ENCODE measurements at regions of chr9 and their contacts with region 1.

Region 1: DNA sequence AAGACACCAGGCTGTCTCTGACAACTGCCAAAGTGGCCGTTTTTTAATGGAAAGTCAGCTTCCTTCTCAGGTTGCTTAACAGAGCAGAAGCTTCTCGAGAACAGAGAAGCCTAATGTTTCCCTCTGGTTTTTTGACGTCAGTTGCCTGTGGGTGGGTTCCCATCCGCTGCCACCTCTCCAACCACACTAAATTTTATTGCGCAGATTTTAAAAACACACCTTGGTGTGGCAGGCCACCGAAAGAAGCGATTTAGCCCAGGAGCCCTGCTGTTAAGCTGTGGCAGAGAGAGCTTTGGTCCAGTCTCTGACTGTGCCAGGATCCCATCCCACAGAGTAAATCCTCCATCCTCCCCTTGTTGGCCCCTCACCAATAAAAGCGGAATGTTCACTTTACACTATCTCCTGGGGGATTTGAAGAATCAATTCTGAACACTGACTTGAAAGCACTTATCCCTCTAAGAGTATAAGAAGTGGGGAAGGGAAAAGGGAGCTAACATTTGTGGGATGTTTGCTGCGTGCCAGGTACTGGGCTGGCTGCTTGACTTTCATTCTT is 181.6 kb downstream of the AOPEP start:
- DNase-seq: no peak
- H3K4me3 Mint-ChIP-seq: no peak overlapping the region
- H3K27ac Mint-ChIP-seq: no peak overlapping the region
- H3K4me1 Mint-ChIP-seq: peaks cover 7% of the 10 kb centered on the region
- H3K27me3 Mint-ChIP-seq: no peaks in the 10 kb centered on the region

Region 2: DNA sequence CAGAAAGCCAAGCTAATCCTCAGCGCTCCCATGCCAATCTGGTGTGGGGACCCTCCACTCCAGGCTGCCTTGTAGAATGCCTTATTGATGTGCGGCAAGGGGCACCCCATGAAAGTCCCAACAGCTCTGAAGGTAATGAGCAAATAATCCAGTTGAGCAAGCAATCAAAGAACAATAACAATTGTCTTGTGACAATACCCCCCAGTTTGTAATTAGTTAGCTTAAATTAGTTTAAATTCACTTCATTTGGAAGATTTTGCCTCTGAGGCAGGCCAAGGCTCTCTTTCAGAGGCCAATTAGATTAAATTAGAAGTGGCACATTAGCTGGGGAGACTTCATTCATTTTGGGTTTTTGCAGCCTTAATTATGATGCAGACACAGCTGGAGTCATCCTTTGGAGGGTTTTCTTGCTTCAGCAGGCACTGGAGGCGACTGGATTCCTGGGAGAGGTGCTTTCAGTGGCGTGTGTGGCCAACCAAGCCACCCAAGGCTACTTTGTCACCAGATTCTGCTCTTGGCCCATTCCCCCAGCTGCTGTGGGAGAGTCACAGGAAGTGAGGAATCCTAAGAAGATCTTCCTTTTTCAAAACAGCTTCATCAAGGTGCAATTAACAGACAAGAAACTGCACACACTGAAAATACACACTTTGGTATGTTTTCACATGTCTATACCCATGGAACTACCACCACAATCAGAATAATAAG is 250.9 kb before region 1 on chr9:
- intact Hi-C with region 1: no loop called
- DNase-seq: no peak
- H3K4me3 Mint-ChIP-seq: no peak overlapping the region
- H3K27ac Mint-ChIP-seq: no peak overlapping the region
- H3K4me1 Mint-ChIP-seq: peaks cover 30% of the 10 kb centered on the region
- H3K27me3 Mint-ChIP-seq: peaks cover 9% of the 10 kb centered on the region

Region 3: DNA sequence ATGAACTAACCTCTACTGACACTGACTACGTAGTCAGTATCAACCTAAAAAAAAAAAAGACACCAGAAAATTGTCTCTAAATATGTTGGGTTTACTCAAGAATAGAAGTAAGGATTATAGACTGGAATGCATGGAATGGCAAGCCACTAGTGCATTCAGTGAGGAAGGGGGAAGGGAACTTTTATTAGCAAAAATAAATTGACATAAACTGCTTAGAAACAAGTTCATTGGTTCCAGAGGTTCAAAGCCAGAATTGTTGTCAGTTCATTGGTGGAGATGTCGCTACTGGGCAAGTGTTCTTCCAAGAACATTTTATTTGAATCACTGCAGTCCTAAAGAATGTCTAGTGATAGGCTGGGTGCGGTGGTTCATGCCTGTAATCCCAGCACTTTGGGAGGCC is 207.6 kb before region 1 on chr9:
- intact Hi-C with region 1: no loop called
- DNase-seq: no peak
- H3K4me3 Mint-ChIP-seq: no peak overlapping the region
- H3K27ac Mint-ChIP-seq: no peak overlapping the region
- H3K4me1 Mint-ChIP-seq: no peaks in the 10 kb centered on the region
- H3K27me3 Mint-ChIP-seq: peaks cover 23% of the 10 kb centered on the region

Region 4: GRCh38 chr9:94952565-94953373 is 44.7 kb after region 1 on chr9:
- intact Hi-C with region 1: loop called (anchors 5 kb)
- DNase-seq: peak; percentile 77
- H3K4me3 Mint-ChIP-seq: peak overlapping the region; percentile 63
- H3K27ac Mint-ChIP-seq: peak overlapping the region; percentile 65
- H3K4me1 Mint-ChIP-seq: peaks cover 35% of the 10 kb centered on the region
- H3K27me3 Mint-ChIP-seq: no peaks in the 10 kb centered on the region

Measured in activated CD4-positive, alpha-beta T cell treated with anti-CD3 and anti-CD28 coated beads, Interleukin-2, amount 10 ng/mL, durations not matched to agents 24 days and 14 days (primary cell).